A673 (cell line): ENCODE measurements at regions of chr9 and their contacts with region 1.

Region 1: DNA sequence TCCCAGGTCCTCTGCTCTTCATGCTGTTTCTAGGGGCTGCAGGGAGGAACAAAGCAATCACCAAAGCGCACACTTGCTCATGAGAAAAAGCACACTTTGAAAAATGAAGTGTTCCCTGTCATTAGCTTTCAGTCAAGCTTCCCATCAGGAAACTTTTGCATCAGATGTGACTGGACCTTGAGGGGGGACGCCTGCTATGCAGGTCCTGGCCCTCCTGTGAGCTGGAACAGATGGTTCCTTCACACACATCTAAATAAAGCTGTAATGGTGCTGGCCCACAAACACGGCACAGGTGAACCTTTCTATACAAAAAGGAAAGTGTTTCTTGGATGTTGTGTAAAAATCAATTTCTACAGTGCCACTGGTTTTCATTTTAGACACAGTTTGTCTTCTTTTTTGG is 266.1 kb downstream of the TLR4 start:
- DNase-seq: no peak
- H3K4me3 ChIP-seq: no peak overlapping the region
- H3K27ac ChIP-seq: no peak overlapping the region
- H3K4me1 ChIP-seq: no peaks in the 10 kb centered on the region
- H3K27me3 ChIP-seq: no peaks in the 10 kb centered on the region
- CTCF ChIP-seq: no peak

Region 2: DNA sequence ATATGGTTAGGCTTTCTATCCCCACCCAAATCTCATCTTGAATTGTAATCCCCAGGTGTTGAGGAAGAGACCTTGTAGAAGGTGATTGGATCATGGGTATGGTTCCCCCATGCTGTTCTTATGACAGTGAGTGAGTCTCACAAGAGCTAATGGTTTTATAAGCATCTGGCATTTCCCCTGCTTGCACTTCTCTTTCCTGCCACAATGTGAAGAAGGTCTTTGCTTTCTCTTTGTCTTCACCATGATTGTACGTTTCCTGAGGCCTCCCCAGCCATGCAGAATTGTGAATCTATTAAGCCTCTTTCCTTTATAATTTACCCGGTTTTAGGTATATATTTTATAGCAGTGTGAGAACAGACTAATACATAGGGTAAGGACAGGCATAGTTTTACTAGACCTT is 68.4 kb after region 1 on chr9:
- CTCF ChIA-PET with region 1: no interaction called
- POLR2A ChIA-PET with region 1: no interaction called
- intact Hi-C with region 1: loop called (anchors 10 kb)
- DNase-seq: no peak
- H3K4me3 ChIP-seq: no peak overlapping the region
- H3K27ac ChIP-seq: no peak overlapping the region
- H3K4me1 ChIP-seq: no peaks in the 10 kb centered on the region
- H3K27me3 ChIP-seq: no peaks in the 10 kb centered on the region
- CTCF ChIP-seq: no peak